Activated naive CD4-positive, alpha-beta T cell treated with anti-CD3 and anti-CD28 coated beads, Interleukin-2, amount 10 ng/mL, durations not matched to agents 7 days and 5 days (primary cell): ENCODE measurements at regions of chr13 and their contacts with region 1.

Region 1: DNA sequence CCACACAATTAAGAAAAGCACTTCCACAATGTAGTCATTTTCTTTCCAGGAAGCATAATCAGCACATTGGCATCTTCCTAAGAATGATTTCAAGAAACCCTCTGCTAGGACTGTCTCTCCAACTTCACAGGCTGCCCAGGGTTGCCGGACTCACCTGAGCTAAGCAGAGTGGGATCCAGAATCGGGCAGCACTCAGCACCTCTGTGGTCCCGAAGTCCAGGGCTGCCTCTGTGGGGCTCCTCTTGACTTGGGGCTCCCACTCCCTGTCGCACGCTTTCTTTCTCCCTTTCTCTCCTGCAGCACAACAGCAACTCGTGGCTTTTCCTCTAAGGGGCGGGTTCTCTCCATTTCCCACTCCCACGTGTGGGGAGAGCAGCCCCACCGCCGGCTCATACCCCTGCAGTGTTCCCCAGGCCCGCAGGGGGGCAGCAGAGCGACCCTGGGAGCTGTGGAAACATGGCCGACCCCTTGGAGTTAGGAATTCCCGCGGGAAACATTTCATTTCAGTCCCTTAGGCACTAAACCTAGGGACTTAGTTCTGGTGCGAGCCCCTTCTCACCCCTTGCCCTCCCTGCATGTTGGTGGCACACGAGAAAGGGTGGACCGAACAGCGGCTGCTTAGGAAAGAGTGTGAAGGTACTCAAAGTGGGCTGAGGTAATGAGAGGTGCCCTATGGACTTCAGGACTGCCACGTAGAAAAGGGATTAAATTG is at the start of gene TMEM272:
- DNase-seq: peak; percentile 63
- H3K4me3 Mint-ChIP-seq: no peak within 1 kb of the TSS
- H3K27ac Mint-ChIP-seq: no peak within 1 kb of the TSS
- H3K4me1 Mint-ChIP-seq: peaks cover 11% of the 10 kb centered on the region
- H3K27me3 Mint-ChIP-seq: peaks cover 19% of the 10 kb centered on the region

Region 2: GRCh38 chr13:51311957-51312520 is 533.0 kb before region 1 on chr13:
- CTCF ChIA-PET with region 1: no interaction called
- DNase-seq: no peak
- H3K4me3 Mint-ChIP-seq: no peak overlapping the region
- H3K27ac Mint-ChIP-seq: no peak overlapping the region
- H3K4me1 Mint-ChIP-seq: no peaks in the 10 kb centered on the region
- H3K27me3 Mint-ChIP-seq: peaks cover 20% of the 10 kb centered on the region

Region 3: DNA sequence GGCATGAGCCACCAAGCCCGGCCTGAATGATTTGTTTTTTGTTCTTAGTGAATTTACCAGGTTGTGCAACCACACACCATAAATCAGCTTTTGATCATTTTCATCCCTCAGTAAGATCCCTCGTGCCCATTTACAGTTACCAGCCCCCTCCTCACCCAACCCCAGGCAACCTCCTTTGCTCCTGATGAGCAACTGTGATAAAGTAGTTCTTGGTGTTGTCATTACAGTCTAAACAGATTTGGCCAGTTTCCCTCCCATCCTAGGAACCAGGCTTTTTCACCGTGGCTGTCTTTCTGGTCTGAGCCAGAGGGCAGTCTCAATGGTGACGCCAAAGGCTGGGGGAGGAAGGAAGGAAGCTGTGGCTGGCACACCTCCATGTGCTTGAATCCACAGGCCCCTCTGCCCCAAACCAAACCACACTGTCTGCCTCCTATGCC is 321.9 kb before region 1 on chr13:
- CTCF ChIA-PET with region 1: no interaction called
- DNase-seq: peak; percentile 50
- H3K4me3 Mint-ChIP-seq: no peak overlapping the region
- H3K27ac Mint-ChIP-seq: peak overlapping the region; percentile 59
- H3K4me1 Mint-ChIP-seq: peaks cover 30% of the 10 kb centered on the region
- H3K27me3 Mint-ChIP-seq: peaks cover 11% of the 10 kb centered on the region

Region 4: GRCh38 chr13:51832471-51833152 is 12.4 kb before region 1 on chr13:
- CTCF ChIA-PET with region 1: interaction called, 11 read pairs
- DNase-seq: peak; percentile 75
- H3K4me3 Mint-ChIP-seq: no peak overlapping the region
- H3K27ac Mint-ChIP-seq: peak overlapping the region; percentile 24
- H3K4me1 Mint-ChIP-seq: peaks cover 76% of the 10 kb centered on the region
- H3K27me3 Mint-ChIP-seq: peaks cover 19% of the 10 kb centered on the region

Region 5: GRCh38 chr13:51861723-51862300 is 16.8 kb after region 1 on chr13 and contains the start of gene CCDC70:
- CTCF ChIA-PET with region 1: interaction called, 12 read pairs
- DNase-seq: no peak
- H3K4me3 Mint-ChIP-seq: no peak within 1 kb of the TSS
- H3K27ac Mint-ChIP-seq: no peak within 1 kb of the TSS
- H3K4me1 Mint-ChIP-seq: peaks cover 3% of the 10 kb centered on the region
- H3K27me3 Mint-ChIP-seq: peaks cover 26% of the 10 kb centered on the region